Heart right ventricle (tissue), 16 donors: ENCODE measurements at regions of chr6 and their contacts with region 1.

Region 1: DNA sequence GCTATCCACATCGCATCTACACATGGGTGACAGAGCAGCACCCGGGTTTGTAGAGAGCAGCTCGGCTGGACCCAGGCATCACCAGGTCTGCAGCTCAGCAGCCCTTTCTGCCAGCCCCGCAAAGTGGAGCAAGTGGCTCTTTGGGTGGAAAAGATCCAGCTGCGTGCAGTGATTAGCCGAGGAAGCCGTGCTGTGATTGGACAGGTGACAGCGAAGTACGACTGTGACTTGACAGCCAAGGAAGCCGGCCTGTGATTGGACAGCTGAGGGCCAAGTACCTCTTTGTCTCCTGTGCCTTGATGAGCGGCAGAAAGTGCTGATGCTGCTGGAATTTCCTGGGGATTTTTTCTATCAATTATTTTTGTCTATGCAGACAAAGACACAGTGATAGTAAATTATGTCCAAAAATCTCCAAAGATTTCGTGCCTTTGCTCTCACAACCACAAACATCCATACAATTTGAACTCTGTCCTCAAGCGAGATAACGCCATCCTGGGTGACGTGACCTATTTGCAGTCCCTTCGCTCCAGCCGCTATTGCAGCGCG is 62.3 kb upstream of the GPR31 start:
- DNase-seq: no peak
- ATAC-seq: no peak
- H3K4me3 ChIP-seq: no peak overlapping the region
- H3K27ac ChIP-seq: no peak overlapping the region
- H3K4me1 ChIP-seq: no peaks in the 10 kb centered on the region
- H3K27me3 ChIP-seq: peaks cover 0 to 8% (median 0%) of the 10 kb centered on the region in 7 donors
- CTCF ChIP-seq: no peak

Region 2: DNA sequence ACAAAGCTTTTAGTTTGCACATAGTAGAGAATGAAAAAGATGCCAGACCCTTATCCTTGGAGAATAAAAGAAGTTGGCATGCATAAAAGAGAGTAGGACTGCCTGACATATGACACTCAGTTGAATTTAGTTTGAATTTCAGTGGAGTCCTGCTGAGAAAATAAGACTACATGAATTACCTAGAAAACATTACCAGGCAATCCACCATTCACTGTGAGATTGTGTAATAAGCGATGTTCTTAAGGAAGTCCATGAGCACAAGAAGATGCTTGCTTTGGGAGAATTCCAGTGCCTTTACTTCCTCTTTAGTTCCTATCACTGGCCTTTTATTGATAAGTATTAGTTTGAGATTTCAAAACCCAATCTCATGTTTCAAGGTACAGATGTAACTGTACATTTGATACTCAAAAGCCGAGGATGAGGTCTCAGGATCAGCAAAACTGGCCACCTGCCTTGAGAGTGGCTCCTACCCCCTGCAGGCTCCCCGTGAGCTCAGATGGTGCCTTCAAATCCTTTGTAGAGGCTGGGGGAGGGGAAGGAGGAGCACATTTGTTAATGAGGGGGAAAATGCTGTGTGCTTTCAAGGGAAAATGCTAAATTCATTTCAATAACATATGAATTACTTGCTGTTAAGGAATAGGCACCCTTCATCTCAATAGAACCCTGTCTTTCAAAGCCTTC is 59.9 kb after region 1 on chr6:
- intact Hi-C with region 1: loop called in 6 of 10 experiments (anchors 5 to 10 kb)
- DNase-seq: no peak
- ATAC-seq: no peak
- H3K4me3 ChIP-seq: no peak overlapping the region
- H3K27ac ChIP-seq: no peak overlapping the region
- H3K4me1 ChIP-seq: no peaks in the 10 kb centered on the region
- H3K27me3 ChIP-seq: peaks cover 0 to 36% (median 22%) of the 10 kb centered on the region in 7 donors
- CTCF ChIP-seq: no peak

Region 3: GRCh38 chr6:167285077-167285770 is 65.2 kb after region 1 on chr6:
- intact Hi-C with region 1: loop called in 7 of 10 experiments (anchors 5 to 10 kb)
- DNase-seq: no peak
- ATAC-seq: peak in 1 of 8 donors; percentile 48
- H3K4me3 ChIP-seq: no peak overlapping the region
- H3K27ac ChIP-seq: no peak overlapping the region
- H3K4me1 ChIP-seq: no peaks in the 10 kb centered on the region
- H3K27me3 ChIP-seq: peaks cover 0 to 15% (median 3%) of the 10 kb centered on the region in 7 donors
- CTCF ChIP-seq: no peak

Region 4: GRCh38 chr6:167291623-167292300 is 71.7 kb after region 1 on chr6:
- intact Hi-C with region 1: loop called in 5 of 10 experiments (anchors 5 to 10 kb)
- DNase-seq: no peak
- ATAC-seq: no peak
- H3K4me3 ChIP-seq: no peak overlapping the region
- H3K27ac ChIP-seq: no peak overlapping the region
- H3K4me1 ChIP-seq: peaks cover 0 to 9% (median 0%) of the 10 kb centered on the region in 9 donors
- H3K27me3 ChIP-seq: peaks cover 0 to 11% (median 0%) of the 10 kb centered on the region in 7 donors
- CTCF ChIP-seq: no peak

Region 5: GRCh38 chr6:167350731-167351655 is 131.0 kb after region 1 on chr6:
- intact Hi-C with region 1: loop called in 2 of 10 experiments (anchors 10 kb)
- DNase-seq: peak; percentile 52 to 67
- ATAC-seq: peak; percentile 70 to 85 (median 74)
- H3K4me3 ChIP-seq: peak overlapping the region; percentile 14 to 58 (median 50)
- H3K27ac ChIP-seq: peak overlapping the region in 8 of 10 donors; percentile 3 to 78 (median 61)
- H3K4me1 ChIP-seq: peaks cover 0 to 21% (median 16%) of the 10 kb centered on the region in 9 donors
- H3K27me3 ChIP-seq: peaks cover 0 to 52% (median 34%) of the 10 kb centered on the region in 7 donors
- CTCF ChIP-seq: peak; percentile 49 to 80 (median 72)